Activated CD4-positive, alpha-beta memory T cell treated with anti-CD3 and anti-CD28 coated beads for 36 hours (primary cell): ENCODE measurements at regions of chr11 and their contacts with region 1.

Region 1: GRCh38 chr11:88543902-88544655 is 206.5 kb upstream of the CTSC start:
- DNase-seq: peak; percentile 85
- H3K4me3 Mint-ChIP-seq: no peak overlapping the region
- H3K27ac Mint-ChIP-seq: no peak overlapping the region
- H3K4me1 Mint-ChIP-seq: peaks cover 11% of the 10 kb centered on the region
- H3K27me3 Mint-ChIP-seq: no peaks in the 10 kb centered on the region

Region 2: GRCh38 chr11:87878373-87878779 is 665.7 kb before region 1 on chr11:
- CTCF ChIA-PET with region 1: interaction called, 3 read pairs
- POLR2A ChIA-PET with region 1: no interaction called
- intact Hi-C with region 1: loop called (anchors 5 kb)
- DNase-seq: no peak
- H3K4me3 Mint-ChIP-seq: no peak overlapping the region
- H3K27ac Mint-ChIP-seq: no peak overlapping the region
- H3K4me1 Mint-ChIP-seq: no peaks in the 10 kb centered on the region
- H3K27me3 Mint-ChIP-seq: no peaks in the 10 kb centered on the region

Region 3: GRCh38 chr11:88103337-88104206 is 440.5 kb before region 1 on chr11:
- CTCF ChIA-PET with region 1: interaction called, 19 read pairs
- POLR2A ChIA-PET with region 1: no interaction called
- intact Hi-C with region 1: loop called (anchors 1 kb)
- DNase-seq: peak; percentile 33
- H3K4me3 Mint-ChIP-seq: no peak overlapping the region
- H3K27ac Mint-ChIP-seq: no peak overlapping the region
- H3K4me1 Mint-ChIP-seq: no peaks in the 10 kb centered on the region
- H3K27me3 Mint-ChIP-seq: peaks cover 9% of the 10 kb centered on the region

Region 4: GRCh38 chr11:88484873-88485621 is 59.0 kb before region 1 on chr11:
- CTCF ChIA-PET with region 1: interaction called, 11 read pairs
- POLR2A ChIA-PET with region 1: no interaction called
- intact Hi-C with region 1: loop called (anchors 2 kb)
- DNase-seq: peak; percentile 44
- H3K4me3 Mint-ChIP-seq: no peak overlapping the region
- H3K27ac Mint-ChIP-seq: no peak overlapping the region
- H3K4me1 Mint-ChIP-seq: peaks cover 2% of the 10 kb centered on the region
- H3K27me3 Mint-ChIP-seq: peaks cover 3% of the 10 kb centered on the region

Region 5: GRCh38 chr11:88523379-88524071 is 20.6 kb before region 1 on chr11:
- CTCF ChIA-PET with region 1: no interaction called
- POLR2A ChIA-PET with region 1: no interaction called
- intact Hi-C with region 1: no loop called
- DNase-seq: no peak
- H3K4me3 Mint-ChIP-seq: no peak overlapping the region
- H3K27ac Mint-ChIP-seq: no peak overlapping the region
- H3K4me1 Mint-ChIP-seq: no peaks in the 10 kb centered on the region
- H3K27me3 Mint-ChIP-seq: peaks cover 1% of the 10 kb centered on the region